AG04450 (cell line): ENCODE measurements at regions of chr3 and their contacts with region 1.

Region 1: GRCh38 chr3:8769088-8769822 is at the start of gene OXTR:
- DNase-seq: peak; percentile 69
- H3K4me3 ChIP-seq: peak within 1 kb of the TSS; percentile 66
- H3K27ac ChIP-seq: peak within 1 kb of the TSS; percentile 57
- H3K27me3 ChIP-seq: no peaks in the 10 kb centered on the region
- CTCF ChIP-seq: peak; percentile 98
- polyA plus RNA-seq, gene OXTR: 57.2 and 58.7 TPM in 2 replicates

Region 2: DNA sequence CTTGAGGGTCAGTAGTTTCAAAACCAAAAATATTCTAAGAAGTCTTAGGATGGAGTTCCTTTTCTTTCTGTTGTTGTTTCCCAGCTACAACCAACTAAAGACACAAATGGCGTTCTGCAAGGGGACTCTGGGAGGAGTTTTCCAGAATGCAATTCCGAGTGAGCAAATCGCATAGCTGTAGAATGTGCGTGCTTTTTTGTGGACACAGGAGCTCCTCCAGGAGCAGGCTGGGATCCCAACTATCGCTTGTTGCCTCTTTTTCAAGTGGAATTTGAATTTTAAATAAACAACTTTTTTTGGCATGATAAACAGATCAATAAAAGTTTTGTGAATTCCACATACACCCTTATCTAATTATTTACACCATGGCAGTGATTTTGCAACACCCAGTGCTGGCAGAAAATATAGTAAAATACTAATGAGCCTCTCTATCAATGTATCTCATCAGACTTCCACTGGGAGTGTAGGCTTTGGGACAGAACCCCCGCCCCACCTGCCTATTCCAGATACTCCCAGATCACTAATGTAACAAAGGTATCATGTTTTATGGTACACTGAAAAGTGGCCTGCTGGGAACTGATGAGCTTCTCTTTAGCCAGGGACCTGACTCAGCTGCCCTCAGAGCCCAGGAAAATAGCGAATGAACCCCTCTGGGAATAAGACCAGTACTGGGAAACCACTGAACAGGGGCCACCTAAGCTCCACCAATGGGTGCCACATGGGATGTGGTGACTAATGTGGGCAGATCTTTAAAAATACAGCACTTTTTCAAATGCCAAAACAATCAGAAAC is 201.3 kb before region 1 on chr3:
- CTCF ChIA-PET with region 1: no interaction called
- POLR2A ChIA-PET with region 1: no interaction called
- DNase-seq: no peak
- H3K4me3 ChIP-seq: no peak overlapping the region
- H3K27ac ChIP-seq: no peak overlapping the region
- H3K27me3 ChIP-seq: no peaks in the 10 kb centered on the region
- CTCF ChIP-seq: no peak

Region 3: GRCh38 chr3:8678751-8679150 is 90.5 kb before region 1 on chr3:
- CTCF ChIA-PET with region 1: no interaction called
- POLR2A ChIA-PET with region 1: no interaction called
- DNase-seq: no peak
- H3K4me3 ChIP-seq: peak overlapping the region; percentile 13
- H3K27ac ChIP-seq: no peak overlapping the region
- H3K27me3 ChIP-seq: no peaks in the 10 kb centered on the region
- CTCF ChIP-seq: no peak

Region 4: DNA sequence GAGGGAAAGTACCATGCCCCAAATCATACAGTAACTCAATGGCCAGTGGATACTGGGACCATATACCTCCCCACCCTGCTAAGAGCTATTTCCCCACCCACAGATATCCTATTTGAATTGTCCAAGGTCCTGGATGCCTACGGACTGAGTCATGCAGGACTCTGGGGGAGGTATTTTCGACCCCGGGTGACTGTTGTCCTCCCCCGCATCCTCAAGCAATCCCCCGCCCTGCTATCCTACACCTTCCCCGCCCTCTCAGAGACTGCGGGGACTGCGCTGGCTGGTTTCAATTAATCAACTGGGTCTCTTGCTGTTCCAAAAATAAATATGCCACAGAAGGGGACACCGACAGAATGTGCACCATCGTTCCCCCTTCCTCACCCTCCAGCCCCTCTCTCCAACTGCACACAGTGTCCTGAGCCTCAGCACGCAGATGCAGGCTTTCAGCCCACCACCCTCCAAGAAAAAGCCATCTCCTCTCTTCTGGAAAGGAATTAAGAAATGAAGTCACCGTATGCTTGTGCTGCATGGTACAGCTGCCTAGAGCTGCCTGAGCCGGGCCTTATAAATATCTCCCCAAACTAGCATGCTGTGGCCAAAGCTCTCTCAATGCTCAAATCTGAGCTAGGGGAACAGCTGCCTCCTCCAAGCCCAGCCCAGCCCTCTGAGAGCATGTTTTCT is 27.5 kb before region 1 on chr3:
- CTCF ChIA-PET with region 1: interaction called, 18 read pairs
- POLR2A ChIA-PET with region 1: interaction called, 3 read pairs
- DNase-seq: peak; percentile 59
- H3K4me3 ChIP-seq: peak overlapping the region; percentile 35
- H3K27ac ChIP-seq: peak overlapping the region; percentile 78
- H3K27me3 ChIP-seq: no peaks in the 10 kb centered on the region
- CTCF ChIP-seq: no peak

Region 5: DNA sequence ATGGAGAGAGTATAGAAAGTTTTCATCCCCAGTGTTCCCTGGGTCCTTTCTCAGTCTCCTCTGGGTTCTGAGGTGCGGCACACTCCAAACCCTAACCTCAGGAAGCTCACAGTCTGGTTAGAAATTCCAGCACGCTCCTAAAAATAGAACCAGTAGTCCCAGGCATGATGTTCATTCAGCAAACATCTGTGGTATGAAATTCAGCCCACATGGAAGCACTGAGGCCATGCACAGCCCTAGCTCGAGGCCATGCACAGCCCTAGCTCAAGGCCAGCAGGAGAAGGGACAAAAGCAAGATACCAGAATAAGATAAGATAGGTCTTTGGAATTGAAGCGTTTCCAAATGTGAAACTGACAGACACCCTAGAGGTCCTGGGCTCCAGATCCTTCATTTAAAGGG is 82.5 kb after region 1 on chr3:
- CTCF ChIA-PET with region 1: interaction called, 26 read pairs
- POLR2A ChIA-PET with region 1: interaction called, 3 read pairs
- DNase-seq: peak; percentile 72
- H3K4me3 ChIP-seq: no peak overlapping the region
- H3K27ac ChIP-seq: peak overlapping the region; percentile 85
- H3K27me3 ChIP-seq: no peaks in the 10 kb centered on the region
- CTCF ChIP-seq: no peak

Region 6: GRCh38 chr3:8888301-8888915 is 119.2 kb after region 1 on chr3:
- CTCF ChIA-PET with region 1: interaction called, 28 read pairs
- POLR2A ChIA-PET with region 1: interaction called, 20 read pairs
- DNase-seq: peak; percentile 66
- H3K4me3 ChIP-seq: no peak overlapping the region
- H3K27ac ChIP-seq: peak overlapping the region; percentile 95
- H3K27me3 ChIP-seq: no peaks in the 10 kb centered on the region
- CTCF ChIP-seq: no peak

Region 7: GRCh38 chr3:8945890-8946600 is 176.8 kb after region 1 on chr3:
- CTCF ChIA-PET with region 1: interaction called, 78 read pairs
- POLR2A ChIA-PET with region 1: interaction called, 4 read pairs
- DNase-seq: no peak
- H3K4me3 ChIP-seq: no peak overlapping the region
- H3K27ac ChIP-seq: no peak overlapping the region
- H3K27me3 ChIP-seq: no peaks in the 10 kb centered on the region
- CTCF ChIP-seq: no peak

Region 8: GRCh38 chr3:9067352-9067975 is 298.2 kb after region 1 on chr3:
- CTCF ChIA-PET with region 1: interaction called, 13 read pairs
- POLR2A ChIA-PET with region 1: no interaction called
- DNase-seq: peak; percentile 32
- H3K4me3 ChIP-seq: no peak overlapping the region
- H3K27ac ChIP-seq: no peak overlapping the region
- H3K27me3 ChIP-seq: peaks cover 7% of the 10 kb centered on the region
- CTCF ChIP-seq: peak; percentile 99